HEK293T (cell line): ENCODE measurements at regions of chr15 and their contacts with region 1.

Region 1: DNA sequence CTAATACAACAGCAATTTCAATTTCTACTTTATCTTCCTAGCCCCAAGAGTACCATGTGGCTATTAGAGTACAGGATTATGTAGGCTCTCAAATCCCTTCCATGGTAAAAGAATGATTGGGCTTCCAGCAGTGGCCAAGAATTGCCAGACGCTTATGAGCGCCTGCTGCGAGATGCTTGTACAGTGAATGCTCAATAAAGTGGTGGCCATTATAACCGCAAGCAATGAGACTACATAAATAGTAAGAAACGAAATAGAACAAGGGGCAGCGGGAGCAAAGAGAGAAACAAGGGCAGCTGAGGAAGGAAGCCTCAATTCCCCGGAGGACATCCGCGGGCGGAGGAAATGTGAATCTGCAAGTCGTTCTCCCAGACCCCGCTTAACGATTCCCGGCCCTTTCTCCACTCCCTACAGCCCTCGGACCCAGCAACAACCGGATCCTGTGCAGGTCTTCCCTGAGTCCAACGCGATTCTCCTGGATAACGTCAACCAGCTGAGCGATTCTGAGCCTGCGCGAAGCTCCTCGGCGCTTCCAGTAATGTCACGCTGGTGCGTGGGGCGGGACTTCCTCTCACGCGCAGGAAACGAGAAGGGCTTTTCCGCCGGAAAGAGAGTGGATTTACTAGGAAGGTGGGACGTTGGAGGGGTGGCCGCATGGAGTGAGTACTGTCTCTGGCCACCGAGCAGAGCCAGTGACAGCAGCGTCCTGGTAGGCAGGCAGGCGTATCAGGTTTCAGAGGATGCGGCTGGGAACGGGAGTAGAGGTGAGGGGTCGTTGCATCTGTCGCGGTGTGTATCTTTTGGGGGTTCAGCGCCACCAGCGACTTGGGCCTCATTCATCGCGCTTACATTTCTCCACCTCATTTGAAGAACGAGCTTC is 40.5 kb upstream of the AP3B2 start:
- DNase-seq: peak; percentile 97

Region 2: GRCh38 chr15:82641129-82641798 is 108.9 kb before region 1 on chr15:
- CTCF ChIA-PET with region 1: no interaction called
- POLR2A ChIA-PET with region 1: interaction called, 17 read pairs
- DNase-seq: no peak

Region 3: DNA sequence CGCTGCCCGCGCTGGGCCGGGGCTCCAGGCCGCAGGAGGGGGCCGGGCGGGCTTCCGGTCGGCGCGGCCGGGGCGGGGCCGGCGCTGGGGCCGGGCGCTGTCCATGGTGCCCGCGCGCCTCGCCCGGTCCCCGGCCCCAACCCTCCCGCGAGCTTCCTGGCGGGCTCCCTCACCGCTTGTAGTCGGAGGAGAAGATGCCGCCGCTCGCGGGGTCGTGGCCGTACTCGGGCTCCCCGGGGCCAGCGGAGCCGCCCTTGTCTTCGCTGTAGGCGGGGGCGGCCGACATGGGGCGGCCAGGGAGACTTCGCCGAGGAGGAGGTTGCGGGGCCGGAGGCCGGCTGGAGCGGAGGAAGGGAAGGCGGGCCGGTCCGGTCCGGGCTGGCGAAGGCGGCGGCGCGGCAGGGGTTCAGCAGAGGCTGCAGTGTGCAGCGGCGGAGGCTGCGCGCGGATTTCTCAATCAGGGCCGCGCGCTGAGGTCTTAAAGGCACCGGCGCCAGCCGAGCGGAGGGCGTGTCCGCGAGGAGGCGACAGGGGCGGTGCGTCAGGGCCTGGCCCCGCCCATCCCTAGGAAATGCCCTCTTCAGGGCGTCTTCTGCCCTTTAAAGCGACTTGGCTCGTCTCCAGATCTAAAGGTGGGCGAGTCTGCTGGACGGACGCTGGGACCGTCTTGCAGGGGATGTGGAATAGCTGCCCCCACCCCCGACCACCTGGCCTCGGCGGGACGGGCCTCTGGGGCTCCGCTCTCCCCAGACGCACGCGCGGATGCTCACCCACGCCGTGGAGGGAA is 40.6 kb before region 1 on chr15 and contains the start of gene AP3B2:
- CTCF ChIA-PET with region 1: no interaction called
- POLR2A ChIA-PET with region 1: interaction called, 29 read pairs
- DNase-seq: peak; percentile 94

Region 4: GRCh38 chr15:82737975-82738374 is 12.2 kb before region 1 on chr15:
- CTCF ChIA-PET with region 1: interaction called, 3 read pairs
- POLR2A ChIA-PET with region 1: interaction called, 34 read pairs
- DNase-seq: no peak

Region 5: DNA sequence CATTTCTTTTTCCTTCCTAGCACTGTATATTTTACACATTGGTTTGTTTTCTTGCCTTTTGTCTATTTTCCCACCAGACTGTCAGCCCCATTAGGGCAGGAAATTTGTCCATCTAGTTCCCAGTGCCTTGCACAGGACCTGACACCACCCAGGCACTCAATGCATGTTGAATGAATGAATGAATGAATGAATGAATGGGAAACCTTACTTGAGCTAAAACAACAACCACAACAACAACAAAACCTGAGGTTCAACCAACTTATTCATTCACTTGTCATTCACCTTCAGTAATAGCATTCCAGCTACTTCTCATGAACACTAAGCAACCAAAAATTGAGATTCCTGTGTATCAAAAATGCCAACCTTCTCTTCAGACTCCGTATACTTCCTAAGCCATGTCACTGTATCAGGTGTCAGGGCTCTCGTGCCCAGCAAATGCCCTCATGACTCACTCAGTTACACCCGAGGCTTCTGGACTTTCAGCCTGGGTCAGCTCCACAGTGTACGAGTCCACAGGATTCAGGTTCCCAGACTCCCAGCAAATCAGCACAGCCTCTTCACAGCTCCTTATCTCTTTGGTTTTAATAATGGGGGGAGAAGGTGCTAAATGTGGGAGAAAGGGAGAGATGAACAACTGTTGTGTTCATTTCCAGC is 18.4 kb after region 1 on chr15:
- CTCF ChIA-PET with region 1: no interaction called
- POLR2A ChIA-PET with region 1: interaction called, 58 read pairs
- DNase-seq: no peak

Region 6: DNA sequence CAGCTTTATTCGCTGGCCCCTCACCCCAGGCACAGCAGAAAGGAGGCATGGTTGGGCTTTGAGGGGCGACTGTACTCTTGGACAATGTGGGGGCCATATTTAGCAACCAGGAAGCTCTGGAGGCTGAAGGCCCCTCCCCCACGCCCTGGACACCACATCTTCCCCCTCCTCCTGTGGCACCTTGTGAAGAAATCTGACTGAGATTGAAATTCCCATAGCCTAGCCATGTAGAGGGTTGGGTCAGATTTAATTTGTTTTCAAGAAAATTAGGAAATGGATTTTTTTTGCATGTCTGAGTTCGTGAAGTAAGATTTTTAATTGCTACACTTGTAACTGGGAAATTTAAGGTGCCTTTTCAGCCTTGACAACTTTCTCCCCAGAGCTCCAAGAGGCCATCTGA is 31.2 kb after region 1 on chr15:
- CTCF ChIA-PET with region 1: no interaction called
- POLR2A ChIA-PET with region 1: interaction called, 10 read pairs
- DNase-seq: no peak

Region 7: DNA sequence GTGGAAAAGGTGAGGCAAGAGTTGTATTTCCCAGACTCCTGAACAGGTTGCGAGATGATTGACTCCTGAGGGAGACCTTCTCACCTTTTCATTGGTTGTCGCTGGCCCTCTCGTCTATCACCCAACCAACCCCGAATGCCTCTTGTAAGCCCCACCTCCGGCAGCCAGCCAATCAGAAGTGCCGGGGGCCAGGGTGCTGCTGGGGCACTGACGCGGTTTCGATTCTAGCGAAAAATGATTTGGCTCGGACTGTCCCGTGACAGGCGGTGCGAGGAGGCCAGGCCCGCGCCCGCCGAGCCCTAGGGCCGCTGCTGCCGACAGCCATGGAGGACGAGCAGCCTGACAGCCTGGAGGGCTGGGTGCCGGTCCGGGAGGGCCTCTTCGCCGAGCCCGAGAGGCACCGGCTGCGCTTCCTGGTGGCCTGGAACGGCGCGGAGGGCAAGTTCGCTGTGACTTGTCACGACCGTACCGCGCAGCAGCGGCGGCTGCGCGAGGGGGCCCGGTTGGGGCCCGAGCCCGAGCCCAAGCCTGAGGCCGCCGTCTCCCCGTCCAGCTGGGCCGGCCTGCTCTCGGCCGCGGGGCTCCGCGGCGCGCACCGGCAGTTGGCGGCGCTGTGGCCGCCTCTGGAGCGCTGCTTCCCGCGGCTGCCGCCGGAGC is 59.3 kb after region 1 on chr15 and contains the start of gene WHAMM:
- CTCF ChIA-PET with region 1: no interaction called
- POLR2A ChIA-PET with region 1: interaction called, 43 read pairs
- DNase-seq: peak; percentile 98

Region 8: GRCh38 chr15:83243634-83244033 is 493.4 kb after region 1 on chr15:
- CTCF ChIA-PET with region 1: no interaction called
- POLR2A ChIA-PET with region 1: no interaction called
- DNase-seq: no peak